ENCODE measurements at regions of chr1 and their contacts with region 1.

Region 1: DNA sequence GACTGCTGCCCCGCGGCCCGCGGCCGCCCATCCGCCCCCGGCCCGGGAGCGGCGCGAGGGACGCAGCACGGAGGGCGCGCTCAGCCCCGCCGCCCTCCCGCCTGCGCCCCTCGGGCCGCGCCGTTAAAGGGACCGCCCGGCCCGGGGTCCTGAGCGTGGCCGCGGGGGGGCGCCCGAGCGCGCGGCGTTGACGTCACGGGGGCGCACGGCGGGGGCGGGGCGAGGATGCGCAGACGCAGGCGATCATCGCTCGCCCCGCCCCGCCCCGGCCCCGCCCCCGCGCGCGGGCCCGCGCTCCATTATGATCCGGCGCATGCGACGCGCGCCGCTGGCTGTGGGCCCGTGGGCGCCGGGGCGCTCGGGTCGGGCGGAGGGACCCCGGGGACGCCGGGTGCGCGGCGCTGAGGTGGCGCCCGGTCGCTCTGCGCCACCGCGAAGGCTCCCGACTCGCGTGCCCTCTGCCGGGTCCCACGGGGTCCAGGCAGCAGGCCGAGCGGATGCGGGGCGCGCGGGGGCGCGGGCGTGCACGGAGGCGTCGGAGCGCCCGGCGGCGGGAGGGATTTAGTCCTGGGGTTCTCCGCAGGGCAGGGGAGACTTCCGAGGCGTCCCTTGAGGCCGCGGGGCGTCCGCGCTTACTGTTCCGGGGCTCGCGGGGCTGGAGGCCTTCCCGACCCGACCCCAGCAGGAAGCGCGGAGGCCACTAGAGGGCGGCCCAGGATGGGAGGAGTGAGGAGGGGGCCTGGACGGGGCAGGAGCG is at the start of gene DVL1:
- DNase-seq: peak; percentile 81
- ATAC-seq: peak; percentile 71
- H3K4me3 Mint-ChIP-seq: peak within 1 kb of the TSS; percentile 74
- H3K27ac Mint-ChIP-seq: no peak within 1 kb of the TSS
- H3K4me1 Mint-ChIP-seq: peaks cover 25% of the 10 kb centered on the region
- H3K27me3 Mint-ChIP-seq: peaks cover 11% of the 10 kb centered on the region
- total RNA-seq, gene DVL1: 35.3 to 35.5 TPM

Region 2: GRCh38 chr1:1406817-1407635 is 57.6 kb after region 1 on chr1 and contains the start of gene MRPL20:
- CTCF ChIA-PET with region 1: no interaction called
- POLR2A ChIA-PET with region 1: no interaction called
- intact Hi-C with region 1: loop called in 1 of 2 experiments (anchors 1 kb)
- DNase-seq: peak; percentile 98
- ATAC-seq: peak; percentile 95
- H3K4me3 Mint-ChIP-seq: peak within 1 kb of the TSS; percentile 92
- H3K27ac Mint-ChIP-seq: peak within 1 kb of the TSS; percentile 91
- H3K4me1 Mint-ChIP-seq: peaks cover 41% of the 10 kb centered on the region
- H3K27me3 Mint-ChIP-seq: no peaks in the 10 kb centered on the region
- total RNA-seq, gene MRPL20: 126 to 143 TPM

Region 3: GRCh38 chr1:1419642-1420384 is 70.4 kb after region 1 on chr1:
- CTCF ChIA-PET with region 1: no interaction called
- POLR2A ChIA-PET with region 1: no interaction called
- intact Hi-C with region 1: no loop called
- DNase-seq: peak; percentile 7
- ATAC-seq: peak; percentile 47
- H3K4me3 Mint-ChIP-seq: no peak overlapping the region
- H3K27ac Mint-ChIP-seq: no peak overlapping the region
- H3K4me1 Mint-ChIP-seq: peaks cover 5% of the 10 kb centered on the region
- H3K27me3 Mint-ChIP-seq: peaks cover 6% of the 10 kb centered on the region

Region 4: DNA sequence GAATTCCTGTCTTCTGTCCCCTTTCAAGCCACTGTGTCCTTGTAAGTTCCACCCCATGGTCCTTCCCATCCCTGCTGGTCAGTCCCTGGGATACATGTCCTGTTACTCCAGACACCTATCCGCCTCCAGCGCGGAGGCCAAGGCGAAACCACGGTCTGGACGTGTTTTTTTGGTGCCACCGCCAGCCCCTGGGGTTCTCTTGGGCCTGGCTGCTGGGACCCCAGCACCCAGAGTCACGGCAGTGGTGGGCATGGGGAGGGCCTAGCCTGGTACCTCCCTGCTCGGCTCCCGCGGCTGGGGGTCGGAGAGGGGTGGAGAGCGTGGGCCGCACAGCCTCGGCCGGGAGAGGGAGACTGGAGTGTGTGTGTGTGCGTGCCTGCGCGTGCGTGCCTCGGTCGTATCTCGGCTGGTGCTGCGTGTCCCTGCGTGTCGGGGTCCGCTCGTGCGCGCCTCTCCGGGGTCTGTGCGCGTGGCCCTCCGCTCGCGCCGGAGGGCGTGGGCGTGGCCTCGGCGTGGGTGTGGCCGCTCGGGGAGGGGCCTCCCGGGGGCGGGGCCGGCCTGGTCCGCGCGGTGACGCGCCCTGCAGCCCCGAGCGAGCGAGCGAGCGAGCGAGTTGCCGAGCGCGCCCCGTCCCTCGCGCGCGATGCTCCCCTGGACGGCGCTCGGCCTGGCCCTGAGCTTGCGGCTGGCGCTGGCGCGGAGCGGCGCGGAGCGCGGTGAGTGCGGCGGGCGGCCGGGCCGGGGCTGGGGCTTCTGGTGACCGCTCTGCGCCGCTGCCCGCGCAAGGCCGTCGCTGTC is 85.9 kb after region 1 on chr1 and contains the start of gene VWA1:
- CTCF ChIA-PET with region 1: no interaction called
- POLR2A ChIA-PET with region 1: no interaction called
- intact Hi-C with region 1: loop called in 1 of 2 experiments (anchors 2 kb)
- DNase-seq: peak; percentile 82
- ATAC-seq: peak; percentile 68
- H3K4me3 Mint-ChIP-seq: peak within 1 kb of the TSS; percentile 45
- H3K27ac Mint-ChIP-seq: no peak within 1 kb of the TSS
- H3K4me1 Mint-ChIP-seq: peaks cover 10% of the 10 kb centered on the region
- H3K27me3 Mint-ChIP-seq: peaks cover 14% of the 10 kb centered on the region
- total RNA-seq, gene VWA1: 0.56 to 0.78 TPM